H1 (cell line): ENCODE measurements at regions of chr6 and their contacts with region 1.

Region 1: GRCh38 chr6:148608199-148608951 is 138.5 kb upstream of the UST start:
- DNase-seq: no peak
- H3K4me3 ChIP-seq: no peak overlapping the region
- H3K27ac ChIP-seq: no peak overlapping the region
- H3K4me1 ChIP-seq: no peaks in the 10 kb centered on the region
- H3K27me3 ChIP-seq: no peaks in the 10 kb centered on the region
- CTCF ChIP-seq: peak in 2 of 3 experiments; percentile 55 to 62; a peak in 3 of 4 replicates
- EP300 ChIP-seq: no peak
- POLR2A ChIP-seq: no peak
- RAD21 ChIP-seq: peak; percentile 54 to 73

Region 2: DNA sequence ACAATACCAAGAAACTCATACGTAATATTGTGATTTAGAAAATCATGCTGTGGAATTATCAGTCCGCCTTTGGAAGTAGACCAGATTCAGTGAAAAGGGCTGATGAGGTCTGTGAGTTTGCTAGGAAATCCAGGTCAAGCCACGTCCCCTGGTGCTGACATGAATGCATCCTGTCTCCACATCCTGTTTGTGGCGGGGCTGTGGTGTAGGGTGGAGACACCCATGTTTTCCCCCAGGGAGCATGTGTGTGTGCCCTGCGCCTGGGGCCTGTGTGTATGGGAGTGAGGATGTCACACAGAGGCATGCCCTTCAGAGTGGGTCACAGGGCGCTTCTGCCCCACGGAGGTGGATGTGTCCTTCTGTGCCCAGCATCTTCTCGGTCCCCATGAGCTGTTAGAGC is 156.7 kb before region 1 on chr6:
- CTCF ChIA-PET with region 1: no interaction called
- POLR2A ChIA-PET with region 1: no interaction called
- DNase-seq: no peak
- H3K4me3 ChIP-seq: no peak overlapping the region
- H3K27ac ChIP-seq: no peak overlapping the region
- H3K4me1 ChIP-seq: peaks cover 0 to 2% (median under 1%) of the 10 kb centered on the region in 4 experiments; a peak in 6 of 7 replicates
- H3K27me3 ChIP-seq: no peaks in the 10 kb centered on the region
- CTCF ChIP-seq: no peak
- EP300 ChIP-seq: no peak
- POLR2A ChIP-seq: no peak
- RAD21 ChIP-seq: no peak

Region 3: DNA sequence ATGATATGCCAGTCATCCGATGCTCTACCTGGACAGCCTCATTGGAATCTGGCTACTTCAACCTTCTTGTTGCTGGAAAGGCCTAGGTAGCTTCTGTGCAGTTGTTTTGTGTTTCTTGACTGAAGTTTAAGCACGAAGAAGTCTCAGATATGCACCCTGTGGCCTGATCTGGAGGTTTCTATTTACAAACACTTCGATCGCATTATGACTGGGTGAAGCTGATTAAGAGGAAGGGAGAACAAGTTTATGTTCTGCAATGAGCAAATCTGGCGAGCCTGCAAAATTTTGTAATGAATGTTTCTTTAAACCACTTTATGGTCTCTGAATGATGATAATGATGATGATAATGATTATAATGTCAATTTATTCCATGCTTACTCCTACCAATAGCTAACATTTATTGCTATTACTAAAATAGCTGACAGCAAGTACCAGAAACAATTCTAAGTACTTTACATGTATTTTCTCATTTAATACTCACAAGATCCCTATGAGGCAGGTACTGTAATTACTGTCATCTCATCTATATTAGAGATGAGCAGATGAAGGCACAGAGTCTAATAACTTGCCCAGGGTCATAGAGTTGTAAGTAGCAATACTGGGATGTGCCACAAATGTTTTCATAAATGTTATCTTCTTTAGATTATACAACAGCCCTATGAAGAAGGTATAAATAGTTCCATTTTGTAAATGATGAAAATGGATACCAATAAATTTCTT is 12.4 kb after region 1 on chr6:
- CTCF ChIA-PET with region 1: interaction called, 21 read pairs
- POLR2A ChIA-PET with region 1: interaction called, 3 read pairs
- DNase-seq: no peak
- H3K4me3 ChIP-seq: no peak overlapping the region
- H3K27ac ChIP-seq: no peak overlapping the region
- H3K4me1 ChIP-seq: peaks cover 0 to 3% (median 0%) of the 10 kb centered on the region in 4 experiments; a peak in 2 of 7 replicates
- H3K27me3 ChIP-seq: no peaks in the 10 kb centered on the region
- CTCF ChIP-seq: no peak
- EP300 ChIP-seq: no peak
- POLR2A ChIP-seq: no peak
- RAD21 ChIP-seq: no peak

Region 4: DNA sequence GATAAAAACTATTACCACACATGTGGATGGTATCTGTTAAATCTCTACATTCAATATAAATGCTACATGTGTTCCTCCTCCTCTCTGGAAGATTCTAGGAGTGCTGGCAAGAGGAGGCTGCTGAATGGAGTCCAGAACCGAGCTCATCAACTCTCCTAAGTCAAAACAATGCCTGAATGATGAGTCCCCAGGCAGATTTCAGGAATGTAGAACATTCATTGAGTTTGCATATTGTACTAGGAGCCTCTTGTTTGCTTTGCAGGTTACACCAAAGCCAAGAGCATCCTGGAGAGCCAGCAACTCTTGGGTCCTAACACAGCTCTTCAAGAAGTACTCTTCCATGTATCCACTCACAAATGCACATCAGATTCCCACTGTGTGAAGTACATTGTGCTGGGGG is 20.8 kb after region 1 on chr6:
- CTCF ChIA-PET with region 1: interaction called, 11 read pairs
- POLR2A ChIA-PET with region 1: no interaction called
- DNase-seq: no peak
- H3K4me3 ChIP-seq: no peak overlapping the region
- H3K27ac ChIP-seq: no peak overlapping the region
- H3K4me1 ChIP-seq: peaks cover 0 to 9% (median 3%) of the 10 kb centered on the region in 4 experiments; a peak in 3 of 7 replicates
- H3K27me3 ChIP-seq: no peaks in the 10 kb centered on the region
- CTCF ChIP-seq: no peak
- EP300 ChIP-seq: no peak
- POLR2A ChIP-seq: no peak
- RAD21 ChIP-seq: no peak